ENCODE measurements at regions of chr14 and their contacts with region 1.

Region 1: GRCh38 chr14:53325176-53325806 is 172.2 kb upstream of the DDHD1 start:
- DNase-seq: no peak
- ATAC-seq: peak; percentile 93
- H3K4me3 Mint-ChIP-seq: no peak overlapping the region
- H3K27ac Mint-ChIP-seq: no peak overlapping the region
- H3K4me1 Mint-ChIP-seq: peaks cover 35% of the 10 kb centered on the region
- H3K27me3 Mint-ChIP-seq: no peaks in the 10 kb centered on the region
- CTCF ChIP-seq: no peak

Region 2: DNA sequence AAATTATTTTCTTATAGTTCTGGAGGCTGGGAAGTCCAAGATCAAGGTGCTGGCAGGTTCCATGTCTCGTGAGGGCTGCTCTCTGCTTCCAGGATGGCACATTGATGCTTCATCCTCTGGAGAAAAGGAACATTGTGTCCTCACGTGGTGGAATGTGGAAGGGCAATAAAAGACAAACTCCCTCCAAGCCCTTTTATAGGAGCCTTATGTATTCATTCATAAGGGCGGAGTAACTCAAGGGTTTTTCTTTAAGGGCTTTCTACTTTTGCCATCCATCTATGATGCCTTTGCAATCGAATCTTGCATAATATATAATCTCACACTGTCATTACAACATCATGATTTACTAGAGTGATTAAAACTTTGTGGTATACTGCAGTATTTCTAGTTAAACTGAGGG is 39.5 kb before region 1 on chr14:
- CTCF ChIA-PET with region 1: no interaction called
- POLR2A ChIA-PET with region 1: no interaction called
- DNase-seq: no peak
- ATAC-seq: no peak
- H3K4me3 Mint-ChIP-seq: no peak overlapping the region
- H3K27ac Mint-ChIP-seq: no peak overlapping the region
- H3K4me1 Mint-ChIP-seq: no peaks in the 10 kb centered on the region
- H3K27me3 Mint-ChIP-seq: no peaks in the 10 kb centered on the region
- CTCF ChIP-seq: no peak

Region 3: DNA sequence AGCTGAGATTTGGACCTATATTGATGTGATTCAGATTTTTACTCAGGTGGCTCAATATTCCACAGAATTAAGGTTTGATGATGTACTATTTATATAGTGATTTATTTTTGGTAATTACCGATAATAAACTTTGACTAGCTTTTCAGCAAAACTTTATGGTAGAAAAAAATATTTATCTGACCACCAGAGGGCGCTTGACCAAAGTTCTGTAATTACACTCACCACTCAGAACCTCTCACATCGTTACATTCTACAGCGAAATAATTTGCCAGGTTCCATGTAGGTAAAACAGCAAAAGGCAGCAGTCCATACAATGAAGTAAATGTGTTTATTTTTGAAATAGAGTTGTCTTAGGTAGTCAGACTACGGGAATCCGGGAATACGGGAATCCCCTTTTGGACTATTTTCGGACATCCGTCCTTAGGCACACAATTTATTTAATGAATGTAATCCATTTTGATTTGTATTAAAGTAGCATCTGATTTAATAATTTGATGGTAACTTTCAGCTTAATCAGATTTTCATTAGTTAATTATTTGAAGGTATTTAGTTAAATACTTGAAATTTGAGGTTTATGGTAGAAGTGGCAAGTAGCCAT is 29.2 kb before region 1 on chr14:
- CTCF ChIA-PET with region 1: interaction called, 12 read pairs
- POLR2A ChIA-PET with region 1: no interaction called
- DNase-seq: no peak
- ATAC-seq: no peak
- H3K4me3 Mint-ChIP-seq: no peak overlapping the region
- H3K27ac Mint-ChIP-seq: no peak overlapping the region
- H3K4me1 Mint-ChIP-seq: 0 out of 2 replicates have a peak, but pooled peaks cover 4% of the 10 kb centered on the region
- H3K27me3 Mint-ChIP-seq: no peaks in the 10 kb centered on the region
- CTCF ChIP-seq: peak; percentile 68

Region 4: GRCh38 chr14:53306267-53306721 is 19.0 kb before region 1 on chr14:
- CTCF ChIA-PET with region 1: interaction called, 13 read pairs
- POLR2A ChIA-PET with region 1: no interaction called
- DNase-seq: peak; percentile 53
- ATAC-seq: peak; percentile 89
- H3K4me3 Mint-ChIP-seq: peak overlapping the region; percentile 45
- H3K27ac Mint-ChIP-seq: no peak overlapping the region
- H3K4me1 Mint-ChIP-seq: peaks cover 6% of the 10 kb centered on the region; the same call in 1 of the 2 replicates
- H3K27me3 Mint-ChIP-seq: no peaks in the 10 kb centered on the region; the same call in none of the 2 replicates
- CTCF ChIP-seq: peak; percentile 60

Region 5: GRCh38 chr14:53355581-53356112 is 30.4 kb after region 1 on chr14:
- CTCF ChIA-PET with region 1: interaction called, 19 read pairs
- POLR2A ChIA-PET with region 1: no interaction called
- DNase-seq: peak; percentile 57
- ATAC-seq: peak; percentile 95
- H3K4me3 Mint-ChIP-seq: peak overlapping the region; percentile 12
- H3K27ac Mint-ChIP-seq: peak overlapping the region; percentile 98
- H3K4me1 Mint-ChIP-seq: peaks cover 41% of the 10 kb centered on the region
- H3K27me3 Mint-ChIP-seq: no peaks in the 10 kb centered on the region
- CTCF ChIP-seq: no peak

Region 6: GRCh38 chr14:53399057-53399456 is 73.8 kb after region 1 on chr14:
- CTCF ChIA-PET with region 1: interaction called, 11 read pairs
- POLR2A ChIA-PET with region 1: no interaction called
- DNase-seq: peak; percentile 58
- ATAC-seq: peak; percentile 83
- H3K4me3 Mint-ChIP-seq: no peak overlapping the region
- H3K27ac Mint-ChIP-seq: no peak overlapping the region
- H3K4me1 Mint-ChIP-seq: 0 out of 2 replicates have a peak, but pooled peaks cover 5% of the 10 kb centered on the region
- H3K27me3 Mint-ChIP-seq: peaks cover 8% of the 10 kb centered on the region
- CTCF ChIP-seq: no peak

Region 7: GRCh38 chr14:53432378-53432802 is 107.1 kb after region 1 on chr14:
- CTCF ChIA-PET with region 1: no interaction called
- POLR2A ChIA-PET with region 1: no interaction called
- DNase-seq: peak; percentile 60
- ATAC-seq: peak; percentile 99
- H3K4me3 Mint-ChIP-seq: no peak overlapping the region
- H3K27ac Mint-ChIP-seq: no peak overlapping the region
- H3K4me1 Mint-ChIP-seq: peaks cover 3% of the 10 kb centered on the region; the same call in 1 of the 2 replicates
- H3K27me3 Mint-ChIP-seq: no peaks in the 10 kb centered on the region
- CTCF ChIP-seq: peak; percentile 61

Measured in WTC11 (cell line).